Transverse colon (tissue), 4 donors: ENCODE measurements at regions of chr15 and their contacts with region 1.

Region 1: DNA sequence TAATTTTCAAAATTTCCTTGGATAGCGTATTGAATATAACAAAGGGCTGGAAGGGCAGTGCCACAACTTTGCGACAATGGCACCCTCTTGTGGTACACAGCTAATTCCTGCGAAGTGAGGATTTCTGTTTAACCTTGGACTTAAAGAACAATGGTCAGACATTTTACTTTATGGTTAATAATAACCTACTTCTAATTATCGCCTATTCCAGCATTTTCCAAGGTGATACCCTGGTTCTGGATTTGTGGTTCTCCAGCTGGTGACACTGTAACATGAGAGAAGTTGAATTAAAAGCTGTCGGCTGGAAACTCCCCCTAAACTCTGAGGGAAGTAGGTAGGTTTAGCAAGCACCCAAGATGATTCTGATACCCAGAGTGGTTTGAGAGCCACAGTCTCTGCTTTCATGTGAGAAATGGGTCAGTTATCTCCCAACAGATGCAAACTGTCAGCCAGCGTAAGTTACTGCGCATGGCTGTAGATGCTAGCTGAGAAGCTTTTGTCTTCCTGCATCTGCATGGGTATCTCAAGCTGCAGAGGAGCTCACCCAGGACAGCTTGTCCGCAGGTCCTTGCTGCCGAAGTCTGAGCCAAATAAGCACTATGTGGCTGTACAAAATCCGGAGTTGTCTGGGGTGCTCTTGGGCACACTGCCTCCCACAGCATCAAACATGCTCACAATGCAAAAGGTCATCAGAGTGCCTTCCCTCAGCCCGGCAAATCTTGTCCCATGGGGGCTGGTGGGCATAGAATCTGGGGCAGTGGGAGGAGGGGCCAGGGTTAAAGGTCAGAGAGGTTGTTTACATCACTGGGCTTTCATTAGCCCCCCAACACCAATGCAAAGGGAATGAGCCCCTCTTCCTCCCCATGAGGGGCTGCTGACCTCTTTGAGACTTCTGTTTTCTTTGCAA is 6.6 kb upstream of the CHSY1 start:
- DNase-seq: peak; percentile 68
- H3K4me3 ChIP-seq: no peak overlapping the region
- H3K27ac ChIP-seq: no peak overlapping the region
- H3K4me1 ChIP-seq: no peaks in the 10 kb centered on the region
- H3K27me3 ChIP-seq: no peaks in the 10 kb centered on the region
- CTCF ChIP-seq: peak; percentile 78 to 87 (median 83)
- EP300 ChIP-seq: no peak
- POLR2A ChIP-seq: no peak

Region 2: DNA sequence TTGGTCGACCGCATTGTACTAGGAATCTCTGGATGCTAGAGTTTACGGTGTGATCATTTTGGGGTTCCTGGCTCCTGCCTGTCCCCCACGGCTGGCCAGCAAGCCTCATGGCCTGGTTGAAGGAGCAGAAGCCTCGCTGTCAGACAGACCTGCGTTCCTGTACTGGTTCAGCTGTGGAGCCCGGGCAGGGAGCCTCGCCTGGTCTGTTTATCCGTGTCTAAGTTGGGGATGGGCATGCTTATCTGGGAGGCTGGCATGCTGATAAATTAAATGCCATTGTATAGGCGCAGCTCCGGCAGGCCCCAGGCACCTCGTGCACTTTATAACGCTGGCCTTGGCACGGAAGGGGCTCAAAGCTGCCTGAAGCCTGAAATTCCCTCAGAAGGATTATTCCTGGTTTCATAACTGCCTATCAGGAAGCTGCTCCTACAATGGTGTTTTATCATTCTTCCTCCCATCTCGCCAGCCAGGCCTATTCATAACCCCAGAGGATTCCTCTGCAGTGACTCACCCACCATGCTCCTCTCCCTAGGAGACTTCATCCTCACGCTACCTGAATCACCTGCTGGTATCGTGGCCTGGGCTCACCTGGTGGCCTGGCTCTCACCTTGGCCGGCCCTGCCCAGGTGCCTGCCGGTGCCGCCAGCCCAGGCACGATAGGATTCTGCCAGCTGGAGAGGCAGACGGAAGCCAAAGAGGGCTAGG is 545.2 kb before region 1 on chr15:
- in situ Hi-C with region 1: no loop called
- intact Hi-C with region 1: no loop called
- DNase-seq: peak; percentile 45
- H3K4me3 ChIP-seq: no peak overlapping the region
- H3K27ac ChIP-seq: peak overlapping the region; percentile 36 to 57 (median 44)
- H3K4me1 ChIP-seq: peaks cover 0 to 16% (median 0%) of the 10 kb centered on the region in 4 donors
- H3K27me3 ChIP-seq: no peaks in the 10 kb centered on the region
- CTCF ChIP-seq: no peak
- EP300 ChIP-seq: no peak
- POLR2A ChIP-seq: no peak

Region 3: GRCh38 chr15:101014921-101015841 is 243.3 kb before region 1 on chr15:
- in situ Hi-C with region 1: loop called (anchors 5 to 10 kb)
- intact Hi-C with region 1: loop called (anchors 2 kb)
- DNase-seq: peak; percentile 75
- H3K4me3 ChIP-seq: no peak overlapping the region
- H3K27ac ChIP-seq: no peak overlapping the region
- H3K4me1 ChIP-seq: no peaks in the 10 kb centered on the region
- H3K27me3 ChIP-seq: no peaks in the 10 kb centered on the region
- CTCF ChIP-seq: peak; percentile 66 to 89 (median 83)
- EP300 ChIP-seq: no peak
- POLR2A ChIP-seq: no peak

Region 4: GRCh38 chr15:101088788-101089583 is 169.5 kb before region 1 on chr15:
- in situ Hi-C with region 1: loop called (anchors 5 to 10 kb)
- intact Hi-C with region 1: loop called (anchors 5 kb)
- DNase-seq: peak; percentile 80
- H3K4me3 ChIP-seq: peak overlapping the region in 2 of 4 donors; percentile 25 to 39
- H3K27ac ChIP-seq: no peak overlapping the region
- H3K4me1 ChIP-seq: peaks cover 0 to 12% (median 2%) of the 10 kb centered on the region in 4 donors
- H3K27me3 ChIP-seq: no peaks in the 10 kb centered on the region
- CTCF ChIP-seq: peak; percentile 94 to 100 (median 100)
- EP300 ChIP-seq: no peak
- POLR2A ChIP-seq: no peak

Region 5: DNA sequence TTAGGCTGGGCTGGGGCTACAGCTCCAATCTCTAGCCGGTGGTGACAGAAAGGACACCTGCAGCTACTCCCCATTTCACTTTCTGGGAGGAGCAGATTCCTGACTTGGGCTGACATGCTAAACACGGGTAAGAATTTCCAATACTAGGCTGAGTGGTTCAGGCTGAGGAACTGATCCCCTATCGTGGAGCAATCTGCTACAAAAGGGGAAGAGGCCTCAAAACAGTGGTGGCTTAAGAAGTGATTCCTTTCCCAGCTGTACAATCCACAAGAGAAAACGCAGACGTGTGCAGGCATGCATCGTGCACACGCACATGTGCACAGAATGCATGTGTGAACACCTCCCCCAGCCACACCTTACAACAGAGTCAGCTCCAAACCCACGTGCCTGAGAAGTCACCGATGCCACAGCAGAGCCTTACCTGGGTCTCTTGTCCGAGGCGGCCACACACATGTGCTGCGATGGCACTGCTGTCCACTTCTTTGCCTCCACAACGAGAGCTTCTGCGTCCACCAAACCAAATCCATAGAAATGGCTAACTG is 123.3 kb after region 1 on chr15:
- in situ Hi-C with region 1: no loop called
- intact Hi-C with region 1: no loop called
- DNase-seq: no peak
- H3K4me3 ChIP-seq: no peak overlapping the region
- H3K27ac ChIP-seq: no peak overlapping the region
- H3K4me1 ChIP-seq: no peaks in the 10 kb centered on the region
- H3K27me3 ChIP-seq: no peaks in the 10 kb centered on the region
- CTCF ChIP-seq: no peak
- EP300 ChIP-seq: no peak
- POLR2A ChIP-seq: no peak

Region 6: GRCh38 chr15:101583284-101583683 is 324.8 kb after region 1 on chr15:
- in situ Hi-C with region 1: no loop called
- intact Hi-C with region 1: no loop called
- DNase-seq: no peak
- H3K4me3 ChIP-seq: no peak overlapping the region
- H3K27ac ChIP-seq: no peak overlapping the region
- H3K4me1 ChIP-seq: no peaks in the 10 kb centered on the region
- H3K27me3 ChIP-seq: no peaks in the 10 kb centered on the region
- CTCF ChIP-seq: no peak
- EP300 ChIP-seq: no peak
- POLR2A ChIP-seq: no peak